ENCODE measurements at regions of chr3 and their contacts with region 1.

Region 1: DNA sequence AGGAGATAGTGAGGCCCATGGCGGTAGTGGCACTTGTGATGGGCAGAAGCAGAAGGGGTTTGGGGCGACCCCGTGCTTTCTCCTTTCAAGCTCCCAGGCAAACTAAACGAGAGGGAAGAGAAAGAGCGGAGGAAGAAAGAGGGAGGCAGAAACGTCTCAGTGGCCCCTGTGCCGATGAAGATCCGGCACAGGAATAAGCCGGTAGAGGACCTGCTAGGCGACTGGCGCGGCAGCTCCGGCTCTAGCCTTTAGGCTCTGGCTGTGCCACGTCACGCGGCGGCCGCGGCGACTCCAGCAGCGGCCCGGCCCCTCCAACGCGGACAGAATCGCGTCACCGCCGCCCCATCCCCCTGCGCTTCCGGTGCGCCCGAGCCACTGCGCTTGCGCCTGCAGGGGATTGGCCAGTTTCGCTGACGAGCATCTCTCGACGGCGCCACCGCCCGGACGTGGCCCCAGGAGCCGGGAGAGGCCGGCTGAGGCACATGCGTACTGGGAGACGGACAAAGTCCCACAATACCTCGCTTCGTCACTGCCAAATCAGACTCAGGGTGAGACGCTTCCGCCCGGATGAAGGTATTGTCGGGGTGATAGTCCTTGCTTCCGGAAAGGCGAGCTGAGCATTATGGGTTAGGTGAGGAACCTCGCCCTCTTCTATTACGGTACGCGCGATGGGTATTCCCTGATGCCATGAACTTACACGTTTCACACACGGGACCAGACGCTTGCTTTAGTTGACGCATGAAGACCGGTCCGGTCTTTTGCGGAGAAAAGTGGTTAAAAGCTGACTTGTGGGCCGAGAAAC is at the start of gene ARF4:
- DNase-seq: peak; percentile 99 to 100
- H3K4me3 ChIP-seq: peak within 1 kb of the TSS; percentile 62 to 85
- H3K27ac ChIP-seq: peak within 1 kb of the TSS; percentile 93 to 96
- H3K4me1 ChIP-seq: peaks cover 0 to 48% (median 36%) of the 10 kb centered on the region in 4 donors
- H3K27me3 ChIP-seq: no peaks in the 10 kb centered on the region
- CTCF ChIP-seq: peak in 1 of 2 experiments; percentile 15

Region 2: GRCh38 chr3:57555738-57556458 is 41.4 kb before region 1 on chr3 and contains the start of gene PDE12:
- intact Hi-C with region 1: loop called (anchors 5 kb)
- DNase-seq: peak; percentile 88 to 89
- H3K4me3 ChIP-seq: peak within 1 kb of the TSS; percentile 77 to 86
- H3K27ac ChIP-seq: peak within 1 kb of the TSS; percentile 83
- H3K4me1 ChIP-seq: peaks cover 0 to 36% (median 28%) of the 10 kb centered on the region in 4 donors
- H3K27me3 ChIP-seq: no peaks in the 10 kb centered on the region
- CTCF ChIP-seq: no peak

Region 3: GRCh38 chr3:57692259-57693147 is 95.2 kb after region 1 on chr3 and contains the start of gene DENND6A:
- intact Hi-C with region 1: loop called (anchors 1 kb)
- DNase-seq: peak; percentile 86 to 98
- H3K4me3 ChIP-seq: peak within 1 kb of the TSS; percentile 89 to 97
- H3K27ac ChIP-seq: peak within 1 kb of the TSS; percentile 96 to 98
- H3K4me1 ChIP-seq: peaks cover 0 to 44% (median 28%) of the 10 kb centered on the region in 4 donors
- H3K27me3 ChIP-seq: no peaks in the 10 kb centered on the region
- CTCF ChIP-seq: no peak

Region 4: DNA sequence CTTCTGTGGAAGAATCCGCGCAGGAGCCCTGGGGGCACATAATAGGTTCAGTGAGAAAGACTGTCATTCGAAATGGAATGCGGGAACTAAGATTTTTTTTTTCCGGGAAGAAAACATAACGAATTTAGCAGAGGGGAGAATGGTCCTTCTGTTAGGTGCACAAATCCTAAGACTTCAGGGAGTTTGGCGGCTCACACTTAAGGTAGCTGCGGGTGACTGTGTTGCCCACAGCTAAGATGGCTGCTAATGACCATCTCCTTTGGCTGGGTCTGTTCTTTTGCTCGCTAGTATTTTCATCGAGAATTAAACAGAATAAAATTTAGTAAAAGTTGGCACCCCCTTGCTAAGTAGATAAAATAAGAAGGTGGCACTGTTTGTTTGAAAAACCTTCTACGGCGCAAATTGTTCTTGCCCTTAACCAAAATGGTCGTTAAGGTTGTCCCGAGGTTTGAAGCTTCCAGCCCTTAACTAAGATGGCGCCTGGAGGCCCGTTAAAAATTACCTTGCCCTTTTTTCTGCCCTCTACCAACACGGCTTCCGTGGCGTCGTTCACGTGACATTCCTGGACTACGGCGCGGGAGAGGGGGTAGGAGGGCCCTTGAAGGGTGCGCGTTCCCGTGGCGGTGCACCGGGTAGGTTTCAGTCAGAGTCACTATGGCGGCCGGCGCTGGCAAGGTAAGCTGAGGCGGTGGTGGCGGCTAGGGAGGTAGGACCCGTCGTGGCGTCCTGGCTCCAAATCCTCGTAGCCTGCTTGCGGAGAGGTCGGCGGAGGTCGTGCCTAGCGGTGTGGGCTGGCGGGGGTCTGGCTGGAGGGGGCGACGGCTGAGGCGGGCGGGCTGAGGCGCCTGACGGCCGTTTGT is 158.6 kb after region 1 on chr3 and contains the start of gene SLMAP:
- intact Hi-C with region 1: loop called (anchors 5 kb)
- DNase-seq: peak; percentile 98
- H3K4me3 ChIP-seq: peak within 1 kb of the TSS; percentile 76 to 84
- H3K27ac ChIP-seq: peak within 1 kb of the TSS; percentile 87
- H3K4me1 ChIP-seq: peaks cover 0 to 45% (median 18%) of the 10 kb centered on the region in 4 donors
- H3K27me3 ChIP-seq: no peaks in the 10 kb centered on the region
- CTCF ChIP-seq: no peak

Measured in tibial artery (tissue), 4 donors.